Panc1 (cell line): ENCODE measurements at regions of chrX and their contacts with region 1.

Region 1: GRCh38 chrX:154748712-154749343 is 2.0 kb downstream of the GAB3 start:
- DNase-seq: no peak
- ATAC-seq: peak; percentile 81
- H3K4me3 ChIP-seq: peak overlapping the region; percentile 3 to 31; a peak in 3 of 4 replicates
- H3K27ac ChIP-seq: peak overlapping the region; percentile 75
- H3K4me1 ChIP-seq: peaks cover 38% of the 10 kb centered on the region
- H3K27me3 ChIP-seq: no peaks in the 10 kb centered on the region
- CTCF ChIP-seq: peak; percentile 86

Region 2: GRCh38 chrX:154714925-154715324 is 33.9 kb before region 1 on chrX:
- CTCF ChIA-PET with region 1: interaction called, 4 read pairs
- POLR2A ChIA-PET with region 1: no interaction called
- in situ Hi-C with region 1: no loop called
- intact Hi-C with region 1: loop called (anchors 1 kb)
- DNase-seq: no peak
- ATAC-seq: peak; percentile 91
- H3K4me3 ChIP-seq: no peak overlapping the region
- H3K27ac ChIP-seq: no peak overlapping the region
- H3K4me1 ChIP-seq: peaks cover 10% of the 10 kb centered on the region
- H3K27me3 ChIP-seq: no peaks in the 10 kb centered on the region
- CTCF ChIP-seq: peak; percentile 77

Region 3: DNA sequence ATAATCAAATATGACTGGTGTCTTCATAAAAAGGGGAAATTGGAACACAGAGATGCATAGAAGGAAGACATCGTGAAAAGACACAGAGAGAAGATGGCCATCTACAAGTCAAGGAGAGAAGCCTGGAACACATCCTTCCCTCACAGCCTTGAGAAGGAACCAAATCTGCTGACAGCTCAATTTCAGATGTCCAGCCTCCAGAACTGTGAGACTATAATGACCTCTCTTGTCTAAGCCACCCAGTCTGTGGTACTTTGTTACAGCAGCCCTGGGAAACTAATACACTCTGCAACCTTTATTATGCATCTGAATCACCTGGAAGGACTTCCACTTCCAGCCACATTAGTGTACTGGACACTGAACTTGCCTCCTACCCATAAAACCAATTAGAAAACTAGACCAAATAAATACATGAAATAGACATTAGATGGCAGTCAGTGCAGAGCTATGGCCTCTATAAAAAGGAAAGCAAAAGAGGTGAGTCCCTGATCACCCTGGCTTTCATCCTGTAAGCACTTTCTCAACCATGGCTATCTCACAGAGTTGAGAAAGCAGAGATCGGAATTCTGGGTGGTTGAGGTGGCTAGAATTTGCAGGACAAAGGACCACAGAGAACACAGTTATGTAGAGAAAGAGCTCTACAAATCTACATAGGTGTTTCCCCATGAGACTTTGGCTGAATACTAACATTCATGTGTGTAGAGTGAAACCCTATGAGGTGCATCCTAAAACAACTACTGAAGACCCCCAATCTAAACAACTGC is 23.7 kb before region 1 on chrX:
- CTCF ChIA-PET with region 1: interaction called, 13 read pairs
- POLR2A ChIA-PET with region 1: no interaction called
- in situ Hi-C with region 1: no loop called
- intact Hi-C with region 1: no loop called
- DNase-seq: no peak
- ATAC-seq: no peak; the same call in 1 of the 2 replicates
- H3K4me3 ChIP-seq: no peak overlapping the region
- H3K27ac ChIP-seq: peak overlapping the region; percentile 49
- H3K4me1 ChIP-seq: peaks cover 35% of the 10 kb centered on the region
- H3K27me3 ChIP-seq: no peaks in the 10 kb centered on the region
- CTCF ChIP-seq: peak; percentile 17; the same call in 1 of the 2 replicates

Region 4: GRCh38 chrX:154840856-154841255 is 92.0 kb after region 1 on chrX:
- CTCF ChIA-PET with region 1: interaction called, 4 read pairs
- POLR2A ChIA-PET with region 1: no interaction called
- in situ Hi-C with region 1: no loop called
- intact Hi-C with region 1: loop called (anchors 10 kb)
- DNase-seq: peak; percentile 48
- ATAC-seq: peak; percentile 85
- H3K4me3 ChIP-seq: no peak overlapping the region
- H3K27ac ChIP-seq: no peak overlapping the region
- H3K4me1 ChIP-seq: no peaks in the 10 kb centered on the region
- H3K27me3 ChIP-seq: no peaks in the 10 kb centered on the region
- CTCF ChIP-seq: peak; percentile 56; the same call in 1 of the 2 replicates

Region 5: DNA sequence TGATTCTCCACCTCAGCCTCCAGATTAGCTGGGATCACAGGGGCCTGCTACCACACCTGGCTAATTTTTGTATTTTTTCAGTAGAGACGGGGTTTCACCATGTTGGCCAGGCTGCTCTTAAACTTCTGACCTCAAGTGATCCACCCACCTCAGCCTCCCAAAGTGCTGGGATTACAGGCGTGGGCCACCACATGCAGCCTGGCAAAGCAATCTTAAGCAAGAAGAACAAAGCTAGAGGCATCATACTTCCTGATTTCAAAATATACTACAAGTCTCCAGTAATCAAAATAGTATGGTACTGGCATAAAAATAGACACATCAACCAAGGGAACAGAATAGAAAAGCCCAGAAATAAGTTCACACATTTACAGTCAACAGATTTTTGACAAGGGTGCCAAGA is 124.5 kb after region 1 on chrX:
- CTCF ChIA-PET with region 1: no interaction called
- POLR2A ChIA-PET with region 1: no interaction called
- in situ Hi-C with region 1: no loop called
- intact Hi-C with region 1: no loop called
- DNase-seq: no peak
- ATAC-seq: no peak
- H3K4me3 ChIP-seq: no peak overlapping the region
- H3K27ac ChIP-seq: no peak overlapping the region
- H3K4me1 ChIP-seq: no peaks in the 10 kb centered on the region
- H3K27me3 ChIP-seq: no peaks in the 10 kb centered on the region
- CTCF ChIP-seq: no peak